ENCODE measurements at regions of chr5 and their contacts with region 1.

Region 1: DNA sequence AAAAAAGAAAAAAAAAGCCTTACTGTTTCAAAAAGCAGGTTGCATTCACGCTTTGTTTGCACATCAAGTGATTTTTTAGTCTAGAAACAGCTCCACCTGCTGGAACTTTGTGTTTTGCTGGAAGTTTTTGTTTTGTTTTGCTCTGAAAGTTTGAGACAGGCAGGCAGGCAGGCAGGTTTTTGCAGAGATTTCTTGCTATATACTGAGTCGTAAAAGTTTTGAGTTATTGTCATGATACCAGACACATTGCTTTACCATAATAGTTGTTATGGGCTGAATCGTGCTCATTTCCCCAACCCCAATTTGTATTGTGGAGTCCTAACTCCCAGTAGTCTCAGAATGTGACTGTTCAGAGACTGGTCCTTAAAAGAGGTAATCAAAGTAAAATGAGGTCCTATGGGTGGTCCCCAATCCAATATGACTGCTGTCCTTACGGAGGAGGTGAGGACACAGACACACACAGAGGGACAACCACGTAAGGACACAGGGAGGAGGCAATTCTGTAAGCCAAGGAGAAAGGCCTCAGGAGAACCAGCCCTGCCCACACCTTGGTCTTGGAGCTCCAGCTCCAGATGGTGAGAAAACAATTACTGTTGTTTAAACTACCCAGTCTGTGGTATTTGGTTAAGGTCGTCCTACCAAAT is 20.9 kb downstream of the OR2Y1 start:
- DNase-seq: no peak
- H3K4me3 ChIP-seq: no peak overlapping the region
- CTCF ChIP-seq: peak; percentile 37

Region 2: GRCh38 chr5:180704368-180704869 is 14.5 kb before region 1 on chr5:
- CTCF ChIA-PET with region 1: interaction called, 20 read pairs
- POLR2A ChIA-PET with region 1: no interaction called
- DNase-seq: no peak
- H3K4me3 ChIP-seq: no peak overlapping the region
- CTCF ChIP-seq: no peak

Measured in AG04449 (cell line).